ENCODE measurements at regions of chr12 and their contacts with region 1.

Region 1: DNA sequence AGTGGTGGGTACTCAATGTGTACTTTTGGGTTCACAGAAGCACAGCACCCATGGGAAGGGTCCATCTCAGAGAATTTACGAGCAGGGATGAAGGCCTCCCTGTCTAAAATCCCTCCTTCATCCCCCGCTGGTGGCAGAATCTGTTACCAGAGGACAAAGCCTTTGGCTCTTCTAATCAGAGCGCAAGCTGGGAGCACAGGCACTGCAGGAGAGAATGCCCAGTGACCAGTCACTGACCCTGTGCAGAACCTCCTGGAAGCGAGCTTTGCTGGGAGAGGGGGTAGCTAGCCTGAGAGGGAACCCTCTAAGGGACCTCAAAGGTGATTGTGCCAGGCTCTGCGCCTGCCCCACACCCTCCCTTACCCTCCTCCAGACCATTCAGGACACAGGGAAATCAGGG is 1.5 kb upstream of the GPR162 start:
- DNase-seq: no peak
- ATAC-seq: no peak
- H3K4me3 Mint-ChIP-seq: no peak overlapping the region
- H3K27ac Mint-ChIP-seq: no peak overlapping the region
- H3K4me1 Mint-ChIP-seq: peaks cover 16% of the 10 kb centered on the region
- H3K27me3 Mint-ChIP-seq: peaks cover 38% of the 10 kb centered on the region
- CTCF ChIP-seq: no peak

Region 2: GRCh38 chr12:6914246-6914946 is 94.2 kb after region 1 on chr12 and contains the start of gene ENO2:
- CTCF ChIA-PET with region 1: no interaction called
- POLR2A ChIA-PET with region 1: interaction called, 15 read pairs
- intact Hi-C with region 1: no loop called
- DNase-seq: peak; percentile 71
- ATAC-seq: peak; percentile 93
- H3K4me3 Mint-ChIP-seq: peak within 1 kb of the TSS; percentile 90
- H3K27ac Mint-ChIP-seq: peak within 1 kb of the TSS; percentile 61
- H3K4me1 Mint-ChIP-seq: peaks cover 30% of the 10 kb centered on the region
- H3K27me3 Mint-ChIP-seq: peaks cover 2% of the 10 kb centered on the region
- CTCF ChIP-seq: no peak
- total RNA-seq, gene ENO2: 20.9 and 31.0 TPM in 2 replicates